Calu3 (cell line): ENCODE measurements at regions of chr5 and their contacts with region 1.

Region 1: DNA sequence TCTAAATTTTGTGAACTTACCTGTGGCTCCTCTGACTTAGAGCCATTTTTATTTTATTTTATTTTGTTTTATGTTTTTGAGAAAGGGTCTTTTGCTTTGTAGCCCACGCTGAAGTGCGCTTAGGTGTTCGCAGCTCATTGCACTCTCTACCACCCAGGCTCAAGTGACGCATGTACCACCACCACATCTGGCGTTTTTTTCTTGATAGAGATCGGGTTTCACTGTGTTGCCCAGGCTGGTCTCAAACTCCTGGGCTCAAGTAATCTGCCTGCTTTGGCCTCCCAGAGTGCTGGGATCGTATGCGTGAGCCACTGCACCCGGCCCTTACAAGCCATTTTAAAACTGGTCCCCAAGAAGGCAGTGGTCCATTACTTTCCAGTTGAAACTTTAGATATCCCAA is 18.5 kb downstream of the MATR3 start:
- DNase-seq: no peak
- H3K4me3 Mint-ChIP-seq: no peak overlapping the region
- H3K27ac Mint-ChIP-seq: no peak overlapping the region
- H3K4me1 Mint-ChIP-seq: peaks cover 46% of the 10 kb centered on the region
- H3K27me3 Mint-ChIP-seq: no peaks in the 10 kb centered on the region
- CTCF ChIP-seq: no peak

Region 2: DNA sequence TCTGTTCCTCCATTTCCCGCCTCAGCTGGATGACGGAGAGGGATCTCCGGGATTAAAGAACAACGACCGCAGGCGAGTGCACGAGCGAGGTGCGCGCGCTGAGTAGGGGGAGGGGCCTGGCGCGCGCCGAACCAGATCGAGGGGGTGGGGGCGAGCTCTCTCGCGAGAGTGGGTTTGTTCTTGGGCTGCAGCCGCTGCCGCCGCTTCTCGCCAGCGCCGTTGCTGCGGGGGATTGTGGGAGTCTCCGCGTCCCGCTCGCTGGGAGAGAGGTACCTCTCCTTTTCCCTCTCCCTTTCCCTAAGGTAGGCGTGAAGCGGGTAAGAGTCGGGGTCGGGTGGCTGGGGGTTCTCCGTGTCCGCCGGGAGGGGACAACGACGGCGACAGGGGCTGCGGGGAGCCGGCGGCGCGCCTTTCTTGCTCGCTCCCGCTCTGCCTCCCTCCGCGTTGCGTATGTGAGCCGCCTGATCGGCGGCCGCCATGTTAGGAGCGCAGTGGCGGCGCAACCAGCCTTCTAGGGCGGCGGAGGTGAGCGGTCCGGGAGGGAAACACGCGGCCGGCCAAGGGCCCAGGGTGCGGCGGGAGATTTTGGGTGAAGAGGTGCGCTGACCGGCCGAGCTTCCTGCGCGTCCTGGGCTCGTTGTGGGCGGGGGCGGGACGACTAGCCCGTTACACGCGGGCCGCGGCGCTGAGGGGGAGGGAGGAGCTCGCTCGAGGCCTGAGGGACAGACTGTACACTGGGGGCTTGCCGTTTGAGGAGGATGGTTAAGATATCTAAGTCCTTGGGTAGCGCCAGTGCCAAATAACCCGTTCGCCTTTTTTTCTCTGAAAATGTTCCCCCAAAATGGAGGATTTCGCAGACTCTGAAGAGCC is 18.3 kb before region 1 on chr5 and contains the start of gene MATR3:
- CTCF ChIA-PET with region 1: interaction called, 6 read pairs
- intact Hi-C with region 1: loop called (anchors 2 kb)
- DNase-seq: peak; percentile 98
- H3K4me3 Mint-ChIP-seq: peak within 1 kb of the TSS; percentile 98
- H3K27ac Mint-ChIP-seq: peak within 1 kb of the TSS; percentile 98
- H3K4me1 Mint-ChIP-seq: peaks cover 35% of the 10 kb centered on the region
- H3K27me3 Mint-ChIP-seq: no peaks in the 10 kb centered on the region
- CTCF ChIP-seq: no peak
- total RNA-seq, gene MATR3: 228 and 230 TPM in 2 replicates

Region 3: DNA sequence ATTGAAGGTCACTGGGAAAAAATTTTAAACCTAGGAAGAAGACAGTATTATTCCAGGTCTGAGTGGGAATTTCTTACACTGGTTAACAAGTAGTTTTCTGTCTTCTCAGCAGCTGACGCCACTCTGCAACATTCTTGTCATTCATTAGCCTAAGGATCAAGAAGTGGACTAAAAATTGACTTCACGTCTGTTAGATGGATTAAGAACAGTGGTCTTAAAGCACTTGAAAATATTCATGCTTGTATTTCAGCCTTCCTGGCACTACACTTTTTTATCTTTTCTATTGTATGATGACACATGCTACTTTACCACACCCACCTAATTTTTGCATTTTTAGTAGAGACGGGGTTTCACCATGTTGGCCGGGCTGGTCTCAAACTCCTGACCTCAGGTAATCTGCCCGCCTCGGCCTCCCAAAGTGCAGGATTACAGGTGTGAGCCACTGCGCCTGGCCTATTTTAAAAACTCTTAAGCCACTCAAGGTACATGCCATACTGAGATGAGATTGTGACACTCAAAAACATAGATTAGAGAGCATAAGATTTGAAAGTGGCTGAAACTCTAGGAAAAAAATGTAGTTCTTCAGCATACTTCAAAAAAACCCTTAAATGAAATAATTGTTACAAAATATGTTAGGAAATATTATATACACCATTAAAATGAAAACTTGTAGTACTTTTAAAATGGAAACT is 10.1 kb before region 1 on chr5:
- CTCF ChIA-PET with region 1: interaction called, 3 read pairs
- intact Hi-C with region 1: loop called (anchors 1 kb)
- DNase-seq: no peak
- H3K4me3 Mint-ChIP-seq: peak overlapping the region; percentile 2
- H3K27ac Mint-ChIP-seq: peak overlapping the region; percentile 41
- H3K4me1 Mint-ChIP-seq: peaks cover 82% of the 10 kb centered on the region
- H3K27me3 Mint-ChIP-seq: no peaks in the 10 kb centered on the region
- CTCF ChIP-seq: no peak